ENCODE measurements at regions of chr19 and their contacts with region 1.

Region 1: DNA sequence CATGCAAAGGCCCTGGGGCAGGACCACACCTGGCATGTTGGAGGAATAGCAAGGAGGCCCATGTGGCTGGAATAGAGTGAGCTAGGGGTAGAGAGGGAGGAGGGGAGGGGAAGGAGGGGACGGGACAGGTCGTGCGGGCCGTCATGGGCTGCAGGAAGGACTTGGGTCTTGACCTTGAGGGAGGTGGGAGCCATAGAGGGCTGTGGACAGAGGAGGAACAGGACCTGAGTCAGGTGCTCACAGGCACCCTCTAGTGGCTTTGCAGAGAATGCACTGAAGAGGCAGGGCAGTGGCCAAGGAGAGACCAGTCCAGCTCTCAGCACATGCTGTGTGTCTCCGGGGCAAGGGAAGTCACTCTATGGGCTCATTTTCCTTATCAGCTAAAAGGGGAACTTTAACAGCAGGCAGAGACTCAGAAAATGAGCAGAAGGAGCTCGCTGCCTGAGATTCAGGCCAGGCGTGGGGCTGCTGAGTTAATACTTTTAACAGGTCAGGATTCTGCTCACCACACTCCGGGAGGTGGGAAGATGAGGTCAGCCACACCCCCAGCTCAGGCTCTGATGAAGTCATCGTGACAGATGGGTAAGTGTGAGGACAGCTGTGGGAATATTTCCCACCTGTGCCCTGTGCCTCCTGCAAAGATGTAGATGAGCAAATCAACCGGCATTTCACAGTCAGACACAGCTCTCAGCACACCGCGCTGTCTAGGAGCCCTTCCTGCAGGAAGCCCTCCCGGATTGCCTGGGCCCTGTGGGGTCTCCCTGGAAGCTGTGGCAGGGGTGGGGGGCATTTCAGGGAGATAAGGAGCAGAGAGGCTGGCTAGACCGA is 6.0 kb upstream of the TNFAIP8L1 start:
- DNase-seq: peak; percentile 73
- CTCF ChIP-seq: peak; percentile 81

Region 2: DNA sequence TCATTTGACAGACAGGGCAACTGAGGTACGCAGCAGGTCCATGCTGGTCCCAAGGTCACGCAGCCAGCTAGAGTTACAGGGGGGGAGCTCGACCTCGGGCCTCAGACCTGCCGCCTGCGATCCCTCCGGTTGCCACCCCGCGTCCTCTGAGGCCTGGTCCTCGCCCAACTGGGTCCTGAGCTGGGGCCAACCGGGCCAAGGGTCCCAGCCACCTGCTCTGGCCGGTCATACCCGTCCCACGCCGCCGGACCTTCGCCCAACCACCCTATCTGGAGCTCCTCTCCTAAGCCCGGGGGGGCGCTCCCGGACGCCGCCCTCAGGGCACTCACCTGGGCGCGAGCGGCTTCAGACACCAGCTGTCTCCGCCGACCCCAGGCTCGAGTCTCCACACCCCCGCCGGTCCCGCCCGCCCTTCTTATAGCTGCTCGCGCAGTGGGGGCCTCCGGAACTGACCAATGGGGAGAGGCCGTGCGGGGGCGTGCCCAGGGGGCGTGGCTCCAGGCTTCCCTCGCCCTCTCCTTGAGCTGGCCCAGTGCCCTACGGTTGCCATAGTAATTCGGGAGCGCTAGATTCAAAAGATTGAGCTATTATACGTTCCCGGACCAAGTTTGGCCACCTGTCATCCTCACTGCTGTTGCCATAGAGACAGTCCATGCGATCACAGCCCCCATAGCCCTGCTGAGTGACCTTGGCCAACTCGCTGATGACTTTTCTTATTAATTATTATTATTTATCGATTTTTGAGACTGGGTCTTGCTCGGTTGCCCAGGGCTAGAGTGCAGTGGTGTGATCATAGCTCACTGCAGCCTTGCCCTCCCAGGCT is 98.3 kb before region 1 on chr19 and contains the start of gene PLIN5:
- CTCF ChIA-PET with region 1: interaction called, 10 read pairs
- POLR2A ChIA-PET with region 1: no interaction called
- DNase-seq: peak; percentile 61
- CTCF ChIP-seq: no peak

Region 3: DNA sequence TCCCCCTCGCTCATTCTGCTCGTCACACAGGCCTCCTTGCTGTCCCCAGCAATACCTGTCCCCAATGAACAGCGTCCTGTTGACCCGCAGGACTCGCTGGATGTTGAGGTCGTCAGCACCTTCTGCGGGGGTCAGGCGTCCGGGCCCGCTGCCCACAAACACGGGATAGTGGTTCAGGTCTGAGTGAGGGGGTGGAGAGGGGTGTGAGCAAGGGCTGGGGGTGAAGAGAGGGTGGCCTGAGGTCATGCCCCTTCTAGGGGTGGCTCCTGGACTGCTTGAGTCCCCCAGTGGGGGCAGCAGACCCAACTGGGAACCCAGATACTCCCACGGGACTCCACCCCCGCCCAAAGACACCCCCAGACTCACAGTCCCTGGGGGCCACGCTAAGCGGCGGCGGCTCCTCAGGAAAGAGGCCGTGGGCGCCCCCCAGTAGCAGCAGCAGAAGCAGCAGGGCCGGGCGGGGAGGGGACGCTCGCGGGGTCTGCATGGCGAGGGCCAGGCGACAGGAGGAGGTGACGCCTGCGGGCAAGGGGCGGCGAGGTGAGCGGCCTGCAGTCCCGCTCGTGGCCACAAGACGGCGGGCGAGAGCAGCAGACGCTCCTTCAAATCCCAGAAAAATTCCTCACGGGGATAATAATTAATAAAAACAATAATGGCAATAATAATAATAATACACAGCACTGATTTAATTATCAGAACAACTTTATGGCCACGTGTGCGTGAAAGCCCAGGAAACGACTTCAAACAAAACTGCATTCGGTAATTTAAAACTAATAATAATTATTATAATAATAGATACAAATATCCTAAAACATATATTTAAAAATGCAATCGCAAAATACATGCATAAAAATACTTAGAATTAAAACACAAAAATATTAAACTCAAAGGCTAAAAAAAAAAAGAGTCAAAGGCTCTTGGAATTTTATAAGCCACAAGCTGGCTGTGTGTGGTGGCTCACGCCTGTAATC is 75.1 kb before region 1 on chr19:
- CTCF ChIA-PET with region 1: interaction called, 10 read pairs
- POLR2A ChIA-PET with region 1: no interaction called
- DNase-seq: peak; percentile 72
- CTCF ChIP-seq: peak; percentile 95

Region 4: GRCh38 chr19:4567584-4568071 is 65.7 kb before region 1 on chr19:
- CTCF ChIA-PET with region 1: interaction called, 102 read pairs
- POLR2A ChIA-PET with region 1: no interaction called
- DNase-seq: no peak
- CTCF ChIP-seq: peak; percentile 62

Region 5: GRCh38 chr19:4576016-4576933 is 57.1 kb before region 1 on chr19:
- CTCF ChIA-PET with region 1: interaction called, 102 read pairs
- POLR2A ChIA-PET with region 1: no interaction called
- DNase-seq: peak; percentile 75
- CTCF ChIP-seq: peak; percentile 75

Region 6: DNA sequence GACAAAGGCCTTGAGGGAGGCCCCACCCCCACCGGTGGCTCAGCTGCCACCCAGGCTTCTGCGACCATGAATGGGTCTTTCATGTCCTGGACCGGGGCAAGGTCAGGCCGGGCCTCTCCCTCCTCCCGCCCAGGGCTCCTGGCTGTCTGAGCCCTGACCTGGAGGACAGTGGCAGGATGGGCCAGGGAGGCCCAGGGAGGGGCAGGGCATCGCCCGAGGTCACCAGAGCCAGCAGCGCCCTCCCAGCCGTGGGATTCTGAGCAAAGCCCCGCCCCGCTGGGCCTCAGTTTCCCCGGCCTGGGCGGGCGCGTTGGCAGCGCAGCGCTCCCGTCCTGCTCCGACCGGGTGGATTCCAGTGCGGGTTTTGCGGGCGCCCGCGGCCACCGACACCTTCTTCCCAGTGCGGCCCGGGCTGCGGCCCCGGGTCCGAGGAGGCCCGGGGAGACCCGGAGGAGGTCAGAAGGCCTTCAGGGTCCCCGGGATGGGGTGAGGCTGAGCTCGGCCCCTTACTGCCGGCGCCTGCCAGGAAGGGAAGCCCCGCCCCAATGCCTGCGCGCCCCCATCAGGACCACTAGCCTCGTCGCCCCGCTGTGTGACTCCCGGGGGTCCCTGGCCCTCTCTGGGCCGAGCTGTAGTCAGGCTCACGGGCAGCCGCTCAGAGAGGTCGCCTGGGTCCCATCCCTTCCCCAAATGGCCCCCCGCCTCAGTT is 49.2 kb before region 1 on chr19:
- CTCF ChIA-PET with region 1: interaction called, 46 read pairs
- POLR2A ChIA-PET with region 1: no interaction called
- DNase-seq: no peak
- CTCF ChIP-seq: no peak

Measured in GM10248 (cell line).